Activated CD4-positive, alpha-beta memory T cell treated with anti-CD3 and anti-CD28 coated beads, Interleukin-2, amount 10 ng/mL, durations not matched to agents 7 days and 5 days (primary cell): ENCODE measurements at regions of chr17 and their contacts with region 1.

Region 1: GRCh38 chr17:76737082-76737675 is at the start of gene SRSF2:
- DNase-seq: peak; percentile 100
- H3K4me3 Mint-ChIP-seq: peak within 1 kb of the TSS; percentile 93
- H3K27ac Mint-ChIP-seq: peak within 1 kb of the TSS; percentile 98
- H3K4me1 Mint-ChIP-seq: peaks cover 51% of the 10 kb centered on the region
- H3K27me3 Mint-ChIP-seq: no peaks in the 10 kb centered on the region
- total RNA-seq, gene SRSF2: 316 to 325 TPM

Region 2: DNA sequence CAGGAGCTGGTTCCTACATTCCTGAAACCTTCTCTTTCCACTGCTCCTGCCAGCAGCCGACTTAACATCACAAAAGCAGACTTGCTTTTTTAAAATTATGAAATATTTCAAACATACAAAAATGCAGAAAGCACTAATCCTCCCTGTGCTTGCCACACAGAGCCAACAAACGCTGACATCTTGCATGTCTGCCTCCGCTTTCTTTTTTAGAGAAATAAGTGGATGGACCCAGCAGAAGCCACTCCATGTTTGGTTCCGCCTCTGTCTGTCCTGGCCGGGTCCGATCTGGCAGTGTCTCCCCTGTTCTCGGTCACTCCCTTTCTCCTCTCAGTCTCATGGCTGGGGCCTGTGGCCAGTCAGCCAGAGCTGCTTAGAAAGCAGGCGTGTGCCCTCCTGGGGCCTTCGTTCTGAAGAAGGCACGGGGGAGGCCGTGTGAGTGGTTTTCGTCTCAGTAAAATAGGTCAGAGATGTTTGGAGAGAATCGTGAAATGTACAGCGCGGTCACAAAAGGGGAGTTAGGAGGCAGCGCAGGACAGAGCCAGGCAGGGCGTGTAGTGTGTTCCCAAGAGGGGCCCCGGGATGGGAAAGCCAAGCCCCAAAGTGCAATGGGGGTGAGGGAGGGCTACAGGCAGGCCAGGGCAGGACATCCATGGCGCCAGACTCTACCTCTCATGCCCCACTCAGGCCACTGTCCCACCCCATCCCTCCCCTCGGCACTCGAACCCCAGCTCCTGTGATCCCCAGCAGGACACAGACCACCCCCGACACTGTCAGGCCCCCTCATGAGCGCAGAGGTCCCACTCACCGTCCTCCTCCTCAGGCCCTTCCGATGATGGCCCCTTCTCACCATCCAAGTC is 49.6 kb before region 1 on chr17:
- CTCF ChIA-PET with region 1: no interaction called
- POLR2A ChIA-PET with region 1: no interaction called
- DNase-seq: no peak
- H3K4me3 Mint-ChIP-seq: no peak overlapping the region
- H3K27ac Mint-ChIP-seq: no peak overlapping the region
- H3K4me1 Mint-ChIP-seq: no peaks in the 10 kb centered on the region
- H3K27me3 Mint-ChIP-seq: no peaks in the 10 kb centered on the region

Region 3: GRCh38 chr17:76714822-76715495 is 22.2 kb before region 1 on chr17:
- CTCF ChIA-PET with region 1: interaction called, 4 read pairs
- POLR2A ChIA-PET with region 1: interaction called, 10 read pairs
- DNase-seq: peak; percentile 78
- H3K4me3 Mint-ChIP-seq: no peak overlapping the region
- H3K27ac Mint-ChIP-seq: peak overlapping the region; percentile 86
- H3K4me1 Mint-ChIP-seq: peaks cover 47% of the 10 kb centered on the region
- H3K27me3 Mint-ChIP-seq: no peaks in the 10 kb centered on the region

Region 4: DNA sequence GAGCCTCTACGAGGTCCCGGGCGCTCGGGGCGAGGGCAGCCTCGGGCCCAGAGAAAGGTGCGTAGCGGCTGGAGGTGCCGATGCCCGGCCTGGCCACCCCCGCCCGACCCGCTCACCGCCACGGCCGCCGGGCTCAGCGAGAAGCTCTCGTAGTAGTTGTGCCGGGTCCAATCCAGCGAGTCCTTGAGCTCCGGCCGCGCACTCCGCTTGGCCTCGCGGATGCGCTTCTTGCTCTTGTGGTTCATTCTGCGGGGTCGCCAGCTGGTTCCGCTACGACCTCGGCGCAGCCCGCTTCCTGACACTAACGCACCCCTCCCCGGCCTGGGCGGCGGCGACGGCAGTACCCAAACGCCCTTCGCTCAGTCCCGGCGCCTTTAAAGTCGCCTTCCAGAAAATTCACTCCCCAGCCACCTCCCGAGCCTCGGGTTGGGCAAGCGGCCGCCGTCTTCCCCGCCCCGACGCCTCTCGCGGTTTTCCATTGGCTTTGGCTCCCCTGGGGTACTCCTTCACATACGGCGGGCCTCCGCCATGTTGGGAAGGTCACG is 10.9 kb before region 1 on chr17 and contains the start of gene JMJD6:
- CTCF ChIA-PET with region 1: interaction called, 29 read pairs
- POLR2A ChIA-PET with region 1: interaction called, 248 read pairs
- DNase-seq: peak; percentile 97
- H3K4me3 Mint-ChIP-seq: peak within 1 kb of the TSS; percentile 91
- H3K27ac Mint-ChIP-seq: peak within 1 kb of the TSS; percentile 94
- H3K4me1 Mint-ChIP-seq: peaks cover 58% of the 10 kb centered on the region
- H3K27me3 Mint-ChIP-seq: no peaks in the 10 kb centered on the region
- total RNA-seq, gene JMJD6: 66.8 to 68.0 TPM

Region 5: GRCh38 chr17:76747716-76748363 is 10.7 kb after region 1 on chr17:
- CTCF ChIA-PET with region 1: interaction called, 3 read pairs
- POLR2A ChIA-PET with region 1: interaction called, 67 read pairs
- DNase-seq: no peak
- H3K4me3 Mint-ChIP-seq: no peak overlapping the region
- H3K27ac Mint-ChIP-seq: no peak overlapping the region
- H3K4me1 Mint-ChIP-seq: peaks cover 30% of the 10 kb centered on the region
- H3K27me3 Mint-ChIP-seq: no peaks in the 10 kb centered on the region

Region 6: DNA sequence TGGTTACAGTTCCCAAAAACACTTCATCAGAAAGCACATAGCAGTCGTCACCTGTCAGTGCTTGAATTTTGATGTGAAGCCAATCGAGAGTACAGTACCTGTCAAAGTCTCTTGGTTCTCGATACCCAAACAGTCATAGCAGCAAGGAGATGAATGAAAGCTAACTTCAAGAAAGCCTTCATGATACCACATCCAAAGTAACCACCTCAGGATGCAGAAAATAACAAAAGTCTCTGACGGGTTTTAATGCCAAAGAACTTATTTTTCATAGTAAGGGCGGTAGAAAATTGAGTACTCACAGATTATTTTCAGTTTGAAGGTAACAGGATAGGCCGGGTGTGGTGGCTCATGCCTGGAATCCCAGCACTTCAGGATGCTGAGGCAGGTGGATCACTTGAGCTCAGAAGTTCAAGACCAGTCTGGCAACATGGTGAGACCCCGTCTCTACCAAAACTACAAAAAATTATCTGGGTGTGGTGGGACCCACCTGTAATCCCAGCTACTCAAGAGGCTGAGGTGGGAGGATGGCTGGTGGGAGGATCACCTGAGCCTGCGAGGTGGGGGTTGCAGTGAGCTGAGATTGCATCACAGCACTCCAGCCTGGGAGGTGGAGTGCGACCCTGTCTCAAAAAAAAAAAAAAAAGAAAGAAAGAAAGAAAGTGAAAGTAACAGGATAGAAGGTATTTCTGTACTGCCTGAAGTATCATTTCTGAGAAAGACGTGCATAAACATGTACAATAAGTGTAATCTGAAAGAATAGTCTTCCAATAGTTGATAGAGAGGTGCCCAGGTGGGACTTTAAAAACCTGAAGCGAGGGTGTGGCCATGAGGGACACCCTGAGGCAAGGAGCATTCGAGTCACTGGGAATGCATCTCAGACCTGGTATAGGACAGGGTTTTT is 16.1 kb after region 1 on chr17:
- CTCF ChIA-PET with region 1: interaction called, 3 read pairs
- POLR2A ChIA-PET with region 1: interaction called, 67 read pairs
- DNase-seq: no peak
- H3K4me3 Mint-ChIP-seq: peak overlapping the region; percentile 82
- H3K27ac Mint-ChIP-seq: peak overlapping the region; percentile 88
- H3K4me1 Mint-ChIP-seq: peaks cover 25% of the 10 kb centered on the region
- H3K27me3 Mint-ChIP-seq: no peaks in the 10 kb centered on the region

Region 7: DNA sequence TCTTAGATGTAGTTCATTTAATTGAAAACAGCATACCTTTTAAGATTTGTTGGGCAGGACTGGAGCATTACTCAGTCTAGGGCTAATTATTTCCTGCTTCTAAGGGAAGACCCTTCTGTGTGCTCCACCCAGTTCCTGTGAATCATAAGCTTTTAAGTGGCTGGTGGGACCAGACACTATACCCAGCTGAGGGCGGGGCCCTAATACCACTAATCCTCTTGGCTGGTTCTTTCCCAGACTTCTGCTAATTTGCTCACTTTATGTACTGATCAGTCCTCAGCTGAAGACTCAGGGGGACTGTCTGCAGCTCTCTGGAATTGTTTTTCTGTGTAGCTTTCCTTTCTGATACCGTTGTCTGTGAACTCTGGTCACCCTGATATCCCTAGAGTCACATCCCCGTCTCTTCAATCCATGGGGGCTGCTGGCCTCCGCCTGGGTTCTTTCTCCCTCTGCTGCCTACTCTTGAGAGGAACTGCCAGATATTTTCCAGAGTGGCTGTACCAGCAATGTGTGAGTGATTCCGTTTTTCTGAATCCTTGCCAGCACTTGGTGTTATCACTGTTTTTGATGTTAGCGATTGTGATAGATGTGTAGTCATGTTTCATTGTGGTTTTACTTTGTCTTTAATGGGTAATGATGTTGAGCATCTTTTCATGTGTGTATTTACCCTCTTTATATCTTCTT is 35.8 kb after region 1 on chr17:
- CTCF ChIA-PET with region 1: no interaction called
- POLR2A ChIA-PET with region 1: interaction called, 48 read pairs
- DNase-seq: peak; percentile 56
- H3K4me3 Mint-ChIP-seq: peak overlapping the region; percentile 78
- H3K27ac Mint-ChIP-seq: peak overlapping the region; percentile 90
- H3K4me1 Mint-ChIP-seq: peaks cover 30% of the 10 kb centered on the region
- H3K27me3 Mint-ChIP-seq: no peaks in the 10 kb centered on the region